Naive thymus-derived CD4-positive, alpha-beta T cell (primary cell): ENCODE measurements at regions of chr2 and their contacts with region 1.

Region 1: GRCh38 chr2:3379647-3380534 is at the start of gene TRAPPC12:
- DNase-seq: peak; percentile 83 to 94 (median 93)
- ATAC-seq: peak; percentile 87
- H3K4me3 ChIP-seq: peak within 1 kb of the TSS; percentile 94
- H3K4me3 Mint-ChIP-seq: peak within 1 kb of the TSS; percentile 96 to 99 (median 98)
- H3K27ac ChIP-seq: peak within 1 kb of the TSS; percentile 87
- H3K27ac Mint-ChIP-seq: peak within 1 kb of the TSS; percentile 94 to 99 (median 99)
- H3K4me1 ChIP-seq: peaks cover 24 to 29% of the 10 kb centered on the region in 2 donors
- H3K4me1 Mint-ChIP-seq: peaks cover 21 to 78% (median 52%) of the 10 kb centered on the region in 7 donors
- H3K27me3 ChIP-seq: no peaks in the 10 kb centered on the region
- H3K27me3 Mint-ChIP-seq: no peaks in the 10 kb centered on the region
- total RNA-seq, gene TRAPPC12: 90.5 to 160 (median 121) TPM

Region 2: GRCh38 chr2:2057125-2057721 is 1322.7 kb before region 1 on chr2:
- CTCF ChIA-PET with region 1: no interaction called
- POLR2A ChIA-PET with region 1: no interaction called
- intact Hi-C with region 1: loop called in 1 of 2 experiments (anchors 5 kb)
- DNase-seq: peak in 8 of 9 donors; percentile 45 to 90 (median 76)
- ATAC-seq: peak; percentile 91
- H3K4me3 ChIP-seq: peak overlapping the region; percentile 7
- H3K4me3 Mint-ChIP-seq: peak overlapping the region; percentile 42 to 76 (median 58)
- H3K27ac ChIP-seq: peak overlapping the region; percentile 16
- H3K27ac Mint-ChIP-seq: peak overlapping the region; percentile 54 to 90 (median 81)
- H3K4me1 ChIP-seq: peaks cover 0 to 25% of the 10 kb centered on the region in 2 donors
- H3K4me1 Mint-ChIP-seq: peaks cover 16 to 42% (median 32%) of the 10 kb centered on the region in 7 donors
- H3K27me3 ChIP-seq: no peaks in the 10 kb centered on the region
- H3K27me3 Mint-ChIP-seq: peaks cover 0 to 5% (median 0%) of the 10 kb centered on the region in 5 donors

Region 3: GRCh38 chr2:3223080-3223923 is 156.6 kb before region 1 on chr2:
- CTCF ChIA-PET with region 1: no interaction called
- POLR2A ChIA-PET with region 1: no interaction called
- intact Hi-C with region 1: loop called in 1 of 2 experiments (anchors 2 kb)
- DNase-seq: peak in 7 of 9 donors; percentile 4 to 87 (median 23)
- ATAC-seq: peak; percentile 83
- H3K4me3 ChIP-seq: no peak overlapping the region
- H3K4me3 Mint-ChIP-seq: peak overlapping the region in 8 of 10 donors; percentile 30 to 66 (median 58)
- H3K27ac ChIP-seq: peak overlapping the region; percentile 65
- H3K27ac Mint-ChIP-seq: peak overlapping the region; percentile 81 to 96 (median 93)
- H3K4me1 ChIP-seq: peaks cover 17 to 22% of the 10 kb centered on the region in 2 donors
- H3K4me1 Mint-ChIP-seq: peaks cover 16 to 37% (median 32%) of the 10 kb centered on the region in 7 donors
- H3K27me3 ChIP-seq: no peaks in the 10 kb centered on the region
- H3K27me3 Mint-ChIP-seq: no peaks in the 10 kb centered on the region

Region 4: DNA sequence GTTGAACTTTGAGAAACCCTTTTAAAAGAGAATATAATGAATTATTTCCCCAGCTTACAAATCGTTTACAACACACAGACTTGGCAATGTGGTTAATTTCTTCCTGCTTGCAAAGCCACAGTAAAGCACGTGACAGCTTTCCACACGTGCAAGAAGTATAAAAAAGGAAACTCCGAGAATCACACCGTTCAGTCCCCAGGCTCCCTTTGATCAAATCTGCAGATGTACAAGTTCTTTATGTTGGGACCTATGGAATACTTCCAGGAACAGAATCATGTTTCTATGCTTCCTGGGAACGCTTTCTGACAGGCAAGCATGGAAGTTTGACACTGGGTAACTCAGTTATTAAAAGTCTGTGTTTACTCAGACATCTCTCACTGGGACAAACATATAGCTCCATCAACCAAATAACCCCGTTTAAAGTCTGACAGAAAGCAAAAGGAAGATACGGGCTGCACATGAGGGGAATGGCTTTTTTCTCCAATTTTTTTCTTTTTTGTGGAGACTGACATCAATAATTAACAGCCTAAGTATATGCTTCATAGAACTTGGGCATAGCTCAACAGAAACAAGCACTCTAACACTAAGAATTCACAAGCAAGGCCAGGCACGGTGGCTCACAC is 137.0 kb before region 1 on chr2:
- CTCF ChIA-PET with region 1: interaction called, 3 read pairs
- POLR2A ChIA-PET with region 1: no interaction called
- intact Hi-C with region 1: loop called in 1 of 2 experiments (anchors 1 kb)
- DNase-seq: peak in 7 of 9 donors; percentile 62 to 79 (median 74)
- ATAC-seq: peak; percentile 90
- H3K4me3 ChIP-seq: peak overlapping the region; percentile 12
- H3K4me3 Mint-ChIP-seq: peak overlapping the region in 9 of 10 donors; percentile 29 to 86 (median 70)
- H3K27ac ChIP-seq: peak overlapping the region; percentile 69
- H3K27ac Mint-ChIP-seq: peak overlapping the region in 6 of 9 donors; percentile 72 to 93 (median 86)
- H3K4me1 ChIP-seq: peaks cover 33 to 59% of the 10 kb centered on the region in 2 donors
- H3K4me1 Mint-ChIP-seq: peaks cover 17 to 36% (median 23%) of the 10 kb centered on the region in 7 donors
- H3K27me3 ChIP-seq: no peaks in the 10 kb centered on the region
- H3K27me3 Mint-ChIP-seq: no peaks in the 10 kb centered on the region

Region 5: DNA sequence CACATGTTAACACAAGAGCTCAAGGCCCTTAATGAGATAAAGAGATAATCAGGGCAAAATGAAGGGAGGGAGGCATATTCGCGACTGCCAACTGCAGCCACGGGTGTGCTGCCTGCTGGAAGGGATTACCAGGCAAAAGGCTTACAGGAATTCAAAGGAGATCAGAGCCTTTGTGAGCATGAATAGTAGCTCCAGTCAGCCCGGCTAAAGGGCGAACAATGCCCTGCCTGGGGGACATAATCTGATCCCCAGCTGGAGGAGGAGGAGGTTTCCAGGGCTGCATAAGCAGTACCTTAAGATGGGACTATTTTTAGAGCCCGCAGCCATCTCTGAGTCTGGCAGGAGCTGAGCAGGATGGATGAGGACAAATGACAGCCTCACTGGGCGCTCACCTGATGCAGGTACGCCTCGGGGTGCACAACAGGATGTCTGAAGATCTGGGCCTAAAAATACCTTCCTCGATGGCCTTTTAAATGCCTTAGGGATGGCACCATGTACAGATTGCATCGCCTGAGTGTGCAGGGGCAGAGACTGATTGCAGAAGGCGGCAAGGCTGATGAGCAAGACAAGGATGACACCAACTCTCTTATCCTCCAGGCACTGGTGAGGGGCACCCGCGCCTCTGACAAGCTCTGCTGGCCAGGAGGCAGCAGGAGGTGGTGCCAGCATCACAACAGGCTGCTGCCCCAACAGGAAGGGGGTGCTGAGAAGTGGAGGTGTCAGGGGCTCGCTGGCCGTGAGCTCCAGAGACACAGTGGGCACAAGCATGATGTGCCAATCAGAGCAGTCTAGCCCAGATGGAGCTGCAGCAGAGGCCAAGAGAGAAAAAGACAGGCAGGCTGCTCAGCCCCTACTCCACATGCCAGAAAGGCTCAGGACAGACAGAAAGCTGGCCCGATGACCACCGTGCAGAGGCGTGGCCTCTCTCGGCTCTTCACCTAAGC is 113.6 kb before region 1 on chr2:
- CTCF ChIA-PET with region 1: no interaction called
- POLR2A ChIA-PET with region 1: no interaction called
- intact Hi-C with region 1: no loop called
- DNase-seq: no peak
- ATAC-seq: no peak
- H3K4me3 ChIP-seq: no peak overlapping the region
- H3K4me3 Mint-ChIP-seq: no peak overlapping the region
- H3K27ac ChIP-seq: no peak overlapping the region
- H3K27ac Mint-ChIP-seq: peak overlapping the region in 1 of 9 donors; percentile 38
- H3K4me1 ChIP-seq: no peaks in the 10 kb centered on the region
- H3K4me1 Mint-ChIP-seq: peaks cover 0 to 13% (median 5%) of the 10 kb centered on the region in 7 donors
- H3K27me3 ChIP-seq: no peaks in the 10 kb centered on the region
- H3K27me3 Mint-ChIP-seq: no peaks in the 10 kb centered on the region

Region 6: DNA sequence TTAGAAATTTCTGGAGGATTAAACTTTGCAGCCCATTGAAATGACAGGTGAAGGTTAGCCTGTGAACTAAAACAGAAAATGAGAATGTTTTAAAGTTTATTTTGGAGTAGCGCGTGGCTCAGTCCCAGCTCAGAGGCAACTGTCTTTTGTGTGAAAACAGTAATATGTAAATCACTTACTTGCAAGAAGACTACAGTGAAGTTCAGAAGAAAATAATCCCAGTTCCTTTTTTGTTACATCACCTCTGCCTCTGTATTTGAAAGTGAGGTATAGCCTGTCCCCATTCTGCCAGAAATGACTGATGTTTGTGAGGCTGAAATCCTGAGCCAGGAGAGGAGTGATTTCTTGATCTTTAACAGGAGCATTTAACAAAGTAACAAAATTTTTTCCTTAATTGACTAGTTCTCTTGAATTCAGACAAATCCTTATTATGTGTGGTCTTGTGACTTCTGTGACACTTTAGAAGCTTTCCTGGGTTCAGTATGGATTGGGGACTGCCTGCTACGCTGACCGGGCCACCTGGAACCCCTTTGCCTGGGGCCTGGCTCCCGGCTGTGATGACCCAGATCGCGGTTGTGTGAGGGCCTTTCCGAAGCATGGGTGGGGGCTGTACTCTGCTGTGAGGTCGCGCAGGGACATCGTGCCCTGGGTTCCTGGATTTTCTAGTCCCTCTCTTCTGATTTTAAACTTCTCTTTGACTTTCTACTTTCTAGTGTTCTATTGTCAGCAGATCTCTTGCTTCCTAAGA is 23.9 kb after region 1 on chr2:
- CTCF ChIA-PET with region 1: no interaction called
- POLR2A ChIA-PET with region 1: no interaction called
- intact Hi-C with region 1: no loop called
- DNase-seq: no peak
- ATAC-seq: no peak
- H3K4me3 ChIP-seq: no peak overlapping the region
- H3K4me3 Mint-ChIP-seq: no peak overlapping the region
- H3K27ac ChIP-seq: no peak overlapping the region
- H3K27ac Mint-ChIP-seq: no peak overlapping the region
- H3K4me1 ChIP-seq: no peaks in the 10 kb centered on the region
- H3K4me1 Mint-ChIP-seq: peaks cover 0 to 39% (median 25%) of the 10 kb centered on the region in 7 donors
- H3K27me3 ChIP-seq: no peaks in the 10 kb centered on the region
- H3K27me3 Mint-ChIP-seq: no peaks in the 10 kb centered on the region

Region 7: GRCh38 chr2:3423492-3424175 is 43.7 kb after region 1 on chr2:
- CTCF ChIA-PET with region 1: interaction called, 6 read pairs
- POLR2A ChIA-PET with region 1: interaction called, 6 read pairs
- intact Hi-C with region 1: loop called in 1 of 2 experiments (anchors 5 kb)
- DNase-seq: peak; percentile 46 to 82 (median 61)
- ATAC-seq: peak; percentile 85
- H3K4me3 ChIP-seq: no peak overlapping the region
- H3K4me3 Mint-ChIP-seq: no peak overlapping the region
- H3K27ac ChIP-seq: no peak overlapping the region
- H3K27ac Mint-ChIP-seq: peak overlapping the region in 6 of 9 donors; percentile 33 to 85 (median 66)
- H3K4me1 ChIP-seq: no peaks in the 10 kb centered on the region
- H3K4me1 Mint-ChIP-seq: peaks cover 0 to 13% (median 6%) of the 10 kb centered on the region in 7 donors
- H3K27me3 ChIP-seq: no peaks in the 10 kb centered on the region
- H3K27me3 Mint-ChIP-seq: no peaks in the 10 kb centered on the region

Region 8: GRCh38 chr2:3558205-3559014 is 178.5 kb after region 1 on chr2 and contains the start of gene RNASEH1:
- CTCF ChIA-PET with region 1: interaction called, 3 read pairs
- POLR2A ChIA-PET with region 1: interaction called, 18 read pairs
- intact Hi-C with region 1: loop called (anchors 1 kb)
- DNase-seq: peak; percentile 94 to 100 (median 97)
- ATAC-seq: peak; percentile 98
- H3K4me3 ChIP-seq: peak within 1 kb of the TSS; percentile 72
- H3K4me3 Mint-ChIP-seq: peak within 1 kb of the TSS; percentile 86 to 93 (median 92)
- H3K27ac ChIP-seq: peak within 1 kb of the TSS; percentile 98
- H3K27ac Mint-ChIP-seq: peak within 1 kb of the TSS; percentile 90 to 98 (median 96)
- H3K4me1 ChIP-seq: peaks cover 11 to 17% of the 10 kb centered on the region in 2 donors
- H3K4me1 Mint-ChIP-seq: peaks cover 7 to 48% (median 37%) of the 10 kb centered on the region in 7 donors
- H3K27me3 ChIP-seq: no peaks in the 10 kb centered on the region
- H3K27me3 Mint-ChIP-seq: no peaks in the 10 kb centered on the region
- total RNA-seq, gene RNASEH1: 17.6 to 31.2 (median 23.4) TPM

Region 9: DNA sequence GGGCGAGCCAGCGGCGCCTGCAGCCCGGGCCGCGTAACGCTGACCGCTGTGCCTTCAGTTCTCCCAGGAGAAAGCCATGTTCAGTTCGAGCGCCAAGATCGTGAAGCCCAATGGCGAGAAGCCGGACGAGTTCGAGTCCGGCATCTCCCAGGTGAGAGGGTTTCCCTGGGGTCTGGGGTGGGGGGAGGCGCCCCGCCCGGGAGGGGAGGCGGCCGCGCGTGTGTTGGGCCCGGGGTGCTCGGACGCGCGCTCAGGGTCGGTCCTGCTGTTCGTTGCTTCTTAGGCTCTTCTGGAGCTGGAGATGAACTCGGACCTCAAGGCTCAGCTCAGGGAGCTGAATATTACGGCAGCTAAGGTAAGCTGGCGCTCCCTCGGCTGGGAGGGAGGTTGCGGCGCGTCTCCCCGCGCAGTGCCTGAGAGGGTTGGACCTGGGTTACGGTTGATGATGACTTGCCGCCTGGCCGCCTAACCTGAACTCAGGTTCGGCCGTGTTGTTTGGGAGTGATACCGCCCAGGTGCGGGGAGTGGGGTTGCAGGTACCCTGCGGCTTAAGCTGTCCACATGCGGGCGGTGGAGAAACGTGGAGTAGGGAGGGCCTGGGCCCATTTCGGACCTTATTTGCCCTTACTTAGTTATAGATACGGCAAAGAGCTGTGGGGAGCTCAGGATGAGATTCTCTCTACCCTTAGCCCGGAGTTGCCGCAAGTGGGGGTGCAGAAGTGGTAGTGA is 195.8 kb after region 1 on chr2:
- CTCF ChIA-PET with region 1: no interaction called
- POLR2A ChIA-PET with region 1: interaction called, 5 read pairs
- intact Hi-C with region 1: loop called (anchors 1 kb)
- DNase-seq: peak in 7 of 9 donors; percentile 24 to 52 (median 33)
- ATAC-seq: peak; percentile 41
- H3K4me3 ChIP-seq: peak overlapping the region; percentile 76
- H3K4me3 Mint-ChIP-seq: peak overlapping the region; percentile 77 to 96 (median 90)
- H3K27ac ChIP-seq: peak overlapping the region; percentile 87
- H3K27ac Mint-ChIP-seq: peak overlapping the region; percentile 84 to 97 (median 92)
- H3K4me1 ChIP-seq: peaks cover 14 to 25% of the 10 kb centered on the region in 2 donors
- H3K4me1 Mint-ChIP-seq: peaks cover 25 to 52% (median 42%) of the 10 kb centered on the region in 7 donors
- H3K27me3 ChIP-seq: no peaks in the 10 kb centered on the region
- H3K27me3 Mint-ChIP-seq: no peaks in the 10 kb centered on the region